K562 (cell line): ENCODE measurements at regions of chr17 and their contacts with region 1.

Region 1: GRCh38 chr17:1628856-1629646 is 417 bp upstream of the SLC43A2 start:
- DNase-seq: peak; percentile 93 to 98 (median 94)
- ATAC-seq: peak; percentile 89
- H3K4me3 ChIP-seq: peak overlapping the region; percentile 66
- H3K27ac ChIP-seq: peak overlapping the region; percentile 92
- H3K4me1 ChIP-seq: peaks cover 9 to 36% of the 10 kb centered on the region in 2 experiments
- H3K27me3 ChIP-seq: no peaks in the 10 kb centered on the region
- CTCF ChIP-seq: peak; percentile 9 to 65 (median 41); a peak in 3 of 6 replicates
- EP300 ChIP-seq: no peak
- POLR2A ChIP-seq: no peak
- RAD21 ChIP-seq: peak; percentile 56 to 68

Region 2: DNA sequence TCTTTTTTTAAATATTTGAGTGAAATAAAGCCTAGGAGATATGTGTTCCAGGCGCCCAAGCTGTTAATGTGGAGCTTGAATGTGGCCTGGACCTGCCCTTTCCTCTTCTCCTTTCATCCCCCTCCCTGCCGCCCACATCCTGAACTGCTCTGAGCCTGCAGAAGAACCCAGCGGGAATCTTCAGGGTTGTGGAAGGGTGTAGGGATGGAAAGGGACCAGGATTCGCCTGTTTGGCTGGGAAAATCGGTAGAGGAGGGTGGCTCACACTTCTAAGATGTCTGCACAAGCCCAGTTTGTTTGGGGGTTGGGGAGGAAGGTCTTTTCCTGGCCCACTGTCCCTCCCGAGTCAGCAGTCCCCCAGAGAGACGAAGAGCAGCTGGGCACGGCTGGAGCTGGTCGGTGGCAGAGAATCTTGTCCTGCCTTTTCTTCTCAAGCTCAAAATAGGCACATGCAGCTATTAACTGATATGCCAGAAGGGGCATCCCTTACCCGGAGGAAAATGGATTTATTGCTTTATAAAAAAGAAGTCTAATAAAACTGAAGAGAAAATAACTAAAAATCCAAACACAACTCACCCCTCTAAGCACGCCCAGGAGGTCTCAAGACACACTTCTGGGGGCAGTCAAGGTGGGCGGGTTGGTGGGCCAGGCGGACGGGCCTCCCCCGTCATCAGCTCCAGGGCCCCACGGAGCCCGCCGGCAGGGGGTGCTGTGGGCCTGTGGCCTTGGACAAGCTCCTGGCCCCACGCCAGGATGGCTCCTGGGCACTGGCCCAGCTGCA is 54.9 kb before region 1 on chr17:
- CTCF ChIA-PET with region 1: interaction called, 8 read pairs
- POLR2A ChIA-PET with region 1: interaction called, 4 read pairs
- in situ Hi-C with region 1: no loop called
- intact Hi-C with region 1: loop called (anchors 2 kb)
- DNase-seq: peak; percentile 82 to 89 (median 86)
- ATAC-seq: peak; percentile 91
- H3K4me3 ChIP-seq: no peak overlapping the region
- H3K27ac ChIP-seq: no peak overlapping the region
- H3K4me1 ChIP-seq: peaks cover 0 to 36% of the 10 kb centered on the region in 2 experiments; a peak in 3 of 5 replicates
- H3K27me3 ChIP-seq: no peaks in the 10 kb centered on the region
- CTCF ChIP-seq: peak; percentile 81 to 92 (median 84)
- EP300 ChIP-seq: no peak
- POLR2A ChIP-seq: no peak
- RAD21 ChIP-seq: peak; percentile 85 to 92

Region 3: GRCh38 chr17:1673041-1673785 is 44.2 kb after region 1 on chr17:
- CTCF ChIA-PET with region 1: no interaction called
- POLR2A ChIA-PET with region 1: no interaction called
- in situ Hi-C with region 1: no loop called
- intact Hi-C with region 1: no loop called
- DNase-seq: no peak
- ATAC-seq: no peak
- H3K4me3 ChIP-seq: no peak overlapping the region
- H3K27ac ChIP-seq: no peak overlapping the region; the same call in 2 of the 3 replicates
- H3K4me1 ChIP-seq: peaks cover 0 to 3% of the 10 kb centered on the region in 2 experiments; a peak in 2 of 5 replicates
- H3K27me3 ChIP-seq: no peaks in the 10 kb centered on the region
- CTCF ChIP-seq: no peak
- EP300 ChIP-seq: no peak
- POLR2A ChIP-seq: no peak
- RAD21 ChIP-seq: no peak